Aorta (tissue), 5 donors: ENCODE measurements at regions of chr11 and their contacts with region 1.

Region 1: GRCh38 chr11:17598700-17599459 is 51.8 kb downstream of the OTOG start:
- DNase-seq: peak; percentile 77 to 92
- ATAC-seq: peak; percentile 77
- H3K4me3 ChIP-seq: no peak overlapping the region
- H3K27ac ChIP-seq: no peak overlapping the region
- H3K4me1 ChIP-seq: no peaks in the 10 kb centered on the region
- H3K27me3 ChIP-seq: no peaks in the 10 kb centered on the region

Region 2: GRCh38 chr11:16857186-16857585 is 741.7 kb before region 1 on chr11:
- intact Hi-C with region 1: loop called in 1 of 2 experiments (anchors 10 kb)
- DNase-seq: no peak
- ATAC-seq: no peak
- H3K4me3 ChIP-seq: no peak overlapping the region
- H3K27ac ChIP-seq: no peak overlapping the region
- H3K4me1 ChIP-seq: no peaks in the 10 kb centered on the region
- H3K27me3 ChIP-seq: no peaks in the 10 kb centered on the region

Region 3: DNA sequence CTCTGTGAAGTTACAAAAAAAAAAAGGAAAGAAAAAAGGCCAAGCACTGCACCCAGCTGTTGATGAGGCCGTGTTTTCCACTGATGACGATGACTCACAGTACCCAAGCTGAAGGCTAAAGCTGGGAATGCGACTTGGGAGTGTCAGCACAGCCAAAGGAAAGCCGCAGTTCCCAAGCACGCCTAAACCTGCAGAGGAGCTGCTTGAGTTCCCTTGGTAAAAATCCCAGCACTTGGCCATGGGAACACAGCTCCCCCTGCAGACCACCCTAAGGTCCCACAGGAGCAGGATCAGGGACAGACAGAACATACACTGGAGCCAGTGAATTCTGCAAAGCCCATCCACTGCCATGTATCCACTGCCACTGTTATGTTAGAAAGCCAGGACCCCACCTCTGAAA is 374.1 kb after region 1 on chr11:
- intact Hi-C with region 1: loop called (anchors 2 to 5 kb)
- DNase-seq: peak; percentile 75 to 76
- ATAC-seq: peak; percentile 77
- H3K4me3 ChIP-seq: no peak overlapping the region
- H3K27ac ChIP-seq: no peak overlapping the region
- H3K4me1 ChIP-seq: no peaks in the 10 kb centered on the region
- H3K27me3 ChIP-seq: no peaks in the 10 kb centered on the region

Region 4: GRCh38 chr11:17978553-17979287 is 379.8 kb after region 1 on chr11:
- intact Hi-C with region 1: loop called (anchors 2 to 5 kb)
- DNase-seq: no peak
- ATAC-seq: peak; percentile 49
- H3K4me3 ChIP-seq: no peak overlapping the region
- H3K27ac ChIP-seq: no peak overlapping the region
- H3K4me1 ChIP-seq: no peaks in the 10 kb centered on the region
- H3K27me3 ChIP-seq: no peaks in the 10 kb centered on the region

Region 5: GRCh38 chr11:17991783-17992433 is 393.0 kb after region 1 on chr11:
- intact Hi-C with region 1: no loop called
- DNase-seq: no peak
- ATAC-seq: peak; percentile 68
- H3K4me3 ChIP-seq: no peak overlapping the region
- H3K27ac ChIP-seq: no peak overlapping the region
- H3K4me1 ChIP-seq: peaks cover 0 to 4% of the 10 kb centered on the region in 2 donors
- H3K27me3 ChIP-seq: no peaks in the 10 kb centered on the region